Upper lobe of right lung (tissue), 1 donor: ENCODE measurements at regions of chr7 and their contacts with region 1.

Region 1: GRCh38 chr7:106176414-106177299 is 64.5 kb upstream of the SYPL1 start:
- DNase-seq: peak; percentile 90
- ATAC-seq: peak; percentile 94
- H3K4me3 ChIP-seq: no peak overlapping the region
- H3K27ac ChIP-seq: peak overlapping the region; percentile 28
- H3K4me1 ChIP-seq: peaks cover 18% of the 10 kb centered on the region
- H3K27me3 ChIP-seq: no peaks in the 10 kb centered on the region
- CTCF ChIP-seq: peak; percentile 95

Region 2: DNA sequence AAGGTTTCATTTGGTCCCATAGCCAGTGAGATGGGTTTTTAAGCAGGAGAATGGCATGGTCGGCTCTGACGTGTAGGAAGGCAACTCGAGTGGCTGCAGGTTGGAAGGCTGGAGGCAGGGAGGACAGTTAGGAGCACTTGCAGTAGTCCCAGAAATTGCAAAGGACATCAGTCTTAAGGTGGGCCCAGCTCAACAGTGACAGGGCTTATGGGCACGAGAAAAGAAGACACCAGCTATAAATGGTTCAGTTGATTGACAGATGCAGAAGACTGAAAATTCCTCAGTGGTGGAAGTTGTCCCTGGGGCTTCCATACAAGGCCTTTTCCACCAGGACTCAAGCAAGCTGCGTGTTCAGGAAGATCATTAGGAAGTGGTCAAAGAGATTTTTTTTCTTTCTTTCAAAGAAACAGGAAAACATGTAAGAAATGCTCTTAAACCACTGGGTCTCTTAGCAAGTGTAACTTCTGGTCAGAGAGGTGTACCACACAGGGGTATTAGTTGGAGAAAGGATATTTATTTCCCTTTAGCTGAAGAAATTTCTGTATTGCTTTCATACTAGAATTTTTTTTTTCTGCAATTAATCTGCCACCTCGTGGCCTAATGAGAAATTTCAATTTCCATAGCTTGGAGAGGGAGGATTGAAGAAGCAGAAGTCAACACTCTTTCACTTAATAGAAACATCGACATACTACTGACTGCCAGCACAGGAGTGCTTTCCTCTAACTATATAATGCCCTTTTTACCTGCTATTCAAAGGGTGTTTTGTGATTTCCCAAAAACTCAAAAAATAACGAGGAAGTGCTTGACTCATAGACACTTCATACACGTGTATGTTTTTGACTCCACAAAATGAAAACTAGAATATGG is 285.6 kb after region 1 on chr7:
- intact Hi-C with region 1: loop called (anchors 5 kb)
- DNase-seq: no peak
- ATAC-seq: peak; percentile 76
- H3K4me3 ChIP-seq: no peak overlapping the region
- H3K27ac ChIP-seq: no peak overlapping the region
- H3K4me1 ChIP-seq: peaks cover 21% of the 10 kb centered on the region
- H3K27me3 ChIP-seq: no peaks in the 10 kb centered on the region
- CTCF ChIP-seq: peak; percentile 69